Sigmoid colon (tissue), 7 donors: ENCODE measurements at regions of chr21 and their contacts with region 1.

Region 1: DNA sequence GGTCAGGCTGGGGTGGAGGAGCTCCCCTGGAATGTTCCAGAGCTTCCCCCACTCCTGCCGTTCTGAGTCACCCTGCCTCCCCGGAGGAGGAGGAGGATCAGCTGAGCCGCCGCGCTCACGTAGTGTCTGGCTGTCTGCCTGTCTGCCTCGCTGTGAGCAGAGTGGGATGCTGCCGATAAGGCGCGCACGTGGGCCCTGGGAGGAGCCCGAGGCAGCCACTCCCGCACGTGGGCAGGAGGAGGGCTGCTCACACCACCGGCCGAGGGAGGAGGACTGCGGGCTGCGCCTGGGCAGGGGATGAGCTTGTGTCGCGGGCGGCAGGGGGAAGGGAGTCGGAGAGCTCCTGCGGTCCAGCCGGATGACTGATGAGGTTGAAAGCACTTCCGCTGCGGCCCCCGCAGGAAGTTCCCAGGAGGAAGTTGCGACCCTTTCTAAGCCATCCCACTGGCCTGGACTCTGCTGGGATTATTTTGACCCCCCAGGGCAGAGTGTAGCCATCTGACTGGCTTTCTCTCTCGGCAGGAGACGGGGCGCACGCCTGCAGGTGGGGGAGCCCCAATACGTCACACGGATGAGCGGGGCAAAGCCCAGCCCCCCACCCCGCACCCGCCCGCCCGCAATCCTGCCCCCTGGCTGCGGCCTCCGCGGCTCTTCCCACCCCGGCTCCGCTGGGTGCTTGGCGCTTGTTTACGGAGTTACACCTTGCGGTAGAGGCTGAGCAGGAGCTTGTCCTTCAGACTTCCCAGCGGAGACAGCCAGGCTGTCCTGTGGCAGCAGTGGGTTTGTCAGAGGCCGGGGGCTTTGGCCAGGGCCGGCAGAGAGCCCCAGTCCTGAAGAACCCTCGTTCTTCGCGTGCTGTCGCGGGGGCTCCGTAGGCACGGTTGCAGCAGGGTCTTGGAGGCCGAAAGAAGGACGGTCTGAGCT is 9.8 kb downstream of the PDXK start:
- DNase-seq: peak; percentile 99
- H3K4me3 ChIP-seq: peak overlapping the region; percentile 54 to 65 (median 59)
- H3K27ac ChIP-seq: peak overlapping the region; percentile 85 to 95 (median 88)
- H3K4me1 ChIP-seq: peaks cover 0 to 68% (median 51%) of the 10 kb centered on the region in 4 donors
- H3K27me3 ChIP-seq: no peaks in the 10 kb centered on the region
- CTCF ChIP-seq: peak in 2 of 4 experiments; percentile 22 to 57
- EP300 ChIP-seq: peak in 2 of 4 donors; percentile 52 to 96
- POLR2A ChIP-seq: peak; percentile 61 to 74

Region 2: GRCh38 chr21:43659136-43660000 is 69.4 kb before region 1 on chr21 and contains the starts of genes HSF2BP and RRP1B:
- intact Hi-C with region 1: loop called (anchors 2 kb)
- DNase-seq: peak; percentile 89
- H3K4me3 ChIP-seq: peak within 1 kb of the TSS; percentile 84 to 96 (median 86)
- H3K27ac ChIP-seq: peak within 1 kb of the TSS; percentile 88 to 96 (median 91)
- H3K4me1 ChIP-seq: peaks cover 0 to 23% (median 18%) of the 10 kb centered on the region in 4 donors
- H3K27me3 ChIP-seq: no peaks in the 10 kb centered on the region
- CTCF ChIP-seq: no peak
- EP300 ChIP-seq: no peak
- POLR2A ChIP-seq: no peak
- total RNA-seq, gene HSF2BP: 0.16 to 0.83 (median 0.59) TPM
- total RNA-seq, gene RRP1B: 14.3 to 20.5 (median 17.6) TPM

Region 3: GRCh38 chr21:43757601-43758000 is 28.9 kb after region 1 on chr21:
- intact Hi-C with region 1: loop called (anchors 2 kb)
- DNase-seq: no peak
- H3K4me3 ChIP-seq: peak overlapping the region in 3 of 4 donors; percentile 27 to 40 (median 30)
- H3K27ac ChIP-seq: peak overlapping the region; percentile 78 to 84 (median 81)
- H3K4me1 ChIP-seq: peaks cover 0 to 31% (median 21%) of the 10 kb centered on the region in 4 donors
- H3K27me3 ChIP-seq: no peaks in the 10 kb centered on the region
- CTCF ChIP-seq: no peak
- EP300 ChIP-seq: no peak
- POLR2A ChIP-seq: no peak

Region 4: GRCh38 chr21:43775795-43776430 is 47.2 kb after region 1 on chr21 and contains the start of gene CSTB:
- intact Hi-C with region 1: loop called (anchors 2 kb)
- DNase-seq: peak; percentile 90
- H3K4me3 ChIP-seq: peak within 1 kb of the TSS; percentile 50 to 97 (median 80)
- H3K27ac ChIP-seq: peak within 1 kb of the TSS; percentile 82 to 93 (median 91)
- H3K4me1 ChIP-seq: peaks cover 0 to 21% (median 13%) of the 10 kb centered on the region in 4 donors
- H3K27me3 ChIP-seq: no peaks in the 10 kb centered on the region
- CTCF ChIP-seq: no peak
- EP300 ChIP-seq: no peak
- POLR2A ChIP-seq: peak; percentile 36 to 39
- total RNA-seq, gene CSTB: 7.1 to 9.7 (median 7.8) TPM

Region 5: GRCh38 chr21:43789276-43790009 is 60.7 kb after region 1 on chr21 and contains the start of gene RRP1:
- intact Hi-C with region 1: loop called (anchors 2 kb)
- DNase-seq: peak; percentile 94
- H3K4me3 ChIP-seq: peak within 1 kb of the TSS; percentile 68 to 92 (median 80)
- H3K27ac ChIP-seq: peak within 1 kb of the TSS; percentile 87 to 93 (median 90)
- H3K4me1 ChIP-seq: peaks cover 0 to 21% (median 15%) of the 10 kb centered on the region in 4 donors
- H3K27me3 ChIP-seq: no peaks in the 10 kb centered on the region
- CTCF ChIP-seq: peak; percentile 43 to 100 (median 94)
- EP300 ChIP-seq: no peak
- POLR2A ChIP-seq: peak; percentile 44 to 83
- total RNA-seq, gene RRP1: 10.3 to 16.1 (median 11.8) TPM

Region 6: GRCh38 chr21:44065428-44065827 is 336.7 kb after region 1 on chr21:
- intact Hi-C with region 1: no loop called
- DNase-seq: no peak
- H3K4me3 ChIP-seq: no peak overlapping the region
- H3K27ac ChIP-seq: no peak overlapping the region
- H3K4me1 ChIP-seq: peaks cover 0 to 5% (median 3%) of the 10 kb centered on the region in 4 donors
- H3K27me3 ChIP-seq: no peaks in the 10 kb centered on the region
- CTCF ChIP-seq: no peak
- EP300 ChIP-seq: no peak
- POLR2A ChIP-seq: no peak